ENCODE measurements at regions of chr1 and their contacts with region 1.

Region 1: GRCh38 chr1:157505481-157506272 is 46.6 kb downstream of the FCRL5 start:
- DNase-seq: peak; percentile 72
- ATAC-seq: peak; percentile 99
- H3K4me3 Mint-ChIP-seq: no peak overlapping the region
- H3K27ac Mint-ChIP-seq: no peak overlapping the region
- H3K4me1 Mint-ChIP-seq: peaks cover 10% of the 10 kb centered on the region
- H3K27me3 Mint-ChIP-seq: no peaks in the 10 kb centered on the region
- CTCF ChIP-seq: peak; percentile 47

Region 2: GRCh38 chr1:157399984-157400382 is 105.7 kb before region 1 on chr1:
- CTCF ChIA-PET with region 1: no interaction called
- POLR2A ChIA-PET with region 1: no interaction called
- DNase-seq: no peak
- ATAC-seq: no peak
- H3K4me3 Mint-ChIP-seq: no peak overlapping the region
- H3K27ac Mint-ChIP-seq: no peak overlapping the region
- H3K4me1 Mint-ChIP-seq: peaks cover 44% of the 10 kb centered on the region
- H3K27me3 Mint-ChIP-seq: peaks cover 11% of the 10 kb centered on the region
- CTCF ChIP-seq: no peak

Region 3: GRCh38 chr1:157419845-157420542 is 85.7 kb before region 1 on chr1:
- CTCF ChIA-PET with region 1: no interaction called
- POLR2A ChIA-PET with region 1: no interaction called
- DNase-seq: no peak
- ATAC-seq: no peak
- H3K4me3 Mint-ChIP-seq: no peak overlapping the region
- H3K27ac Mint-ChIP-seq: no peak overlapping the region
- H3K4me1 Mint-ChIP-seq: no peaks in the 10 kb centered on the region
- H3K27me3 Mint-ChIP-seq: no peaks in the 10 kb centered on the region; the same call in 1 of the 2 replicates
- CTCF ChIP-seq: no peak

Region 4: DNA sequence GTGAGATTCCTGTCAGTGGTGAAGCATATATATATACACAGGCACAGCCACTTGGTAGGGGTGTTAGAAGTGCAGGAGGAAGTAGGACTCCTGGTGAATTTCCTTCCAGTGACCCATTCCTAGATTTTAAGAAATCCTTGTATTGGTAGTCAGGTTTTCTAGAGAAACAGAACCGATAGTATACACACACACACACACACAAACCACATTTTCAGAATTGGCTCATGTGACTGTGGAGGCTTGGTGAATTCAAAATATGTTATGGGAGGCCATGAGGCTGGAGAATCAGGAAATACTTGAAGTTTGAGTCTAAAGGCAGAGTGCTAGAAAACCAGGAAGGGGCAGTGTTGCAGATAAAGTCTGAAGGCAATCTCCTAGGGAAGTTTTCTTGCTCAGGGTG is 67.5 kb before region 1 on chr1:
- CTCF ChIA-PET with region 1: no interaction called
- POLR2A ChIA-PET with region 1: no interaction called
- DNase-seq: no peak
- ATAC-seq: no peak
- H3K4me3 Mint-ChIP-seq: no peak overlapping the region
- H3K27ac Mint-ChIP-seq: peak overlapping the region; percentile 81
- H3K4me1 Mint-ChIP-seq: peaks cover 53% of the 10 kb centered on the region
- H3K27me3 Mint-ChIP-seq: peaks cover 8% of the 10 kb centered on the region; the same call in 1 of the 2 replicates
- CTCF ChIP-seq: no peak

Region 5: DNA sequence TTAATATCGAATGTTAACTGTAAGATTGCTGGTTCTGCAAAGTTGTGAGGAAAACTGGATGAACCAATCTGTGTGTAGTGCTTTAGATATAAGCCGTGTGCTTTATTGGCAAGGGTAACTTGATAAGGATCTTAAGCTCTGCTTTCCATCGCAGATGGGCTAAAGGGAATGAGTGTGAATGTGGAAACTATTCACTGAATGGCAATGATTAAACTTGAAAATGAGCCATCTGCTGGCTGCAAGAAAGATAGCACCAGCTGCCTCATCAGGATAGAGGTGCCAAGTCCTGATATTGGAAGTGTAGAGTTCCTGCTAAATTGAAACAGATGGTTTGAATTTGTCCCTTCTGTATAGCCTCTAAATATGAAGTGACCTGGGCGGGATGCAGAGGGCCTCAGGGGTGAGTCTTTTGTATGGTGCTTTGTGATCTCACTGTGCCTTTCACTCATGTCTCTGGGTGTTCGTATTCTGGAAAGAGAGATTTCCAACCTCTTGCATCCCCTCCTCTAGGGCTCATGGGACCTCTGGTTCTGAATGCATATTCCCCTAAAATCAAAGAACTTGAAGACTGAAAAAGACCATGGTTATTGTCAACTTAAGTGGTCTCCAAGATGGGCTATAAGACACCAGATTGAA is 185.7 kb after region 1 on chr1:
- CTCF ChIA-PET with region 1: interaction called, 10 read pairs
- POLR2A ChIA-PET with region 1: no interaction called
- DNase-seq: no peak
- ATAC-seq: peak; percentile 97
- H3K4me3 Mint-ChIP-seq: no peak overlapping the region
- H3K27ac Mint-ChIP-seq: no peak overlapping the region
- H3K4me1 Mint-ChIP-seq: 0 out of 2 replicates have a peak, but pooled peaks cover 4% of the 10 kb centered on the region
- H3K27me3 Mint-ChIP-seq: peaks cover 3% of the 10 kb centered on the region
- CTCF ChIP-seq: no peak